ENCODE measurements at regions of chr7 and their contacts with region 1.

Region 1: GRCh38 chr7:127578711-127579275 is 6.6 kb downstream of the GCC1 start:
- DNase-seq: no peak
- ATAC-seq: no peak
- H3K4me3 ChIP-seq: no peak overlapping the region
- H3K4me3 Mint-ChIP-seq: no peak overlapping the region
- H3K27ac ChIP-seq: no peak overlapping the region
- H3K27ac Mint-ChIP-seq: no peak overlapping the region
- H3K4me1 ChIP-seq: peaks cover 30% of the 10 kb centered on the region
- H3K4me1 Mint-ChIP-seq: peaks cover 47% of the 10 kb centered on the region
- H3K27me3 ChIP-seq: no peaks in the 10 kb centered on the region
- H3K27me3 Mint-ChIP-seq: no peaks in the 10 kb centered on the region
- CTCF ChIP-seq: no peak

Region 2: DNA sequence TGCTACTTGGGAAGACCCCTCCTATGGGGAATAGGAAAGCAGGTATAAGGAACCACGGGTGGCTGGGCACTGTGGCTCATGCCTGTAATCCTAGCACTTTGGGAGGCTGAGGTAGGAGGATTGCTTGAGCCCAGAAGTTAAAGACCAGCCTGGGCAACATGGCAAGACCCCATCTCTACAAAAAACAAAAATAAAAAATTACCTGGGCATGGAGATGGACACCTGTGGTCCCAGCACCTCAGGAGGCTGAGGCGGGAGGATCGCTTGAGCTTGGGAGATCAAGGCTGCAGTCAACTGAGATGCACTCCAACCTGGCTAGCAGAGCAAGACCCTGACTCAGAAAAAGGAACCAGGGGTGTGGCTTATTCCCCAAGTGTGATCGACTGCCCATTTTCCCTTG is 13.8 kb after region 1 on chr7:
- CTCF ChIA-PET with region 1: no interaction called
- POLR2A ChIA-PET with region 1: interaction called, 5 read pairs
- intact Hi-C with region 1: loop called in 1 of 2 experiments (anchors 1 kb)
- DNase-seq: no peak
- ATAC-seq: no peak
- H3K4me3 ChIP-seq: no peak overlapping the region
- H3K4me3 Mint-ChIP-seq: no peak overlapping the region
- H3K27ac ChIP-seq: no peak overlapping the region
- H3K27ac Mint-ChIP-seq: no peak overlapping the region
- H3K4me1 ChIP-seq: peaks cover 20% of the 10 kb centered on the region
- H3K4me1 Mint-ChIP-seq: peaks cover 17% of the 10 kb centered on the region
- H3K27me3 ChIP-seq: no peaks in the 10 kb centered on the region
- H3K27me3 Mint-ChIP-seq: no peaks in the 10 kb centered on the region
- CTCF ChIP-seq: no peak